ENCODE measurements at regions of chr19 and their contacts with region 1.

Region 1: DNA sequence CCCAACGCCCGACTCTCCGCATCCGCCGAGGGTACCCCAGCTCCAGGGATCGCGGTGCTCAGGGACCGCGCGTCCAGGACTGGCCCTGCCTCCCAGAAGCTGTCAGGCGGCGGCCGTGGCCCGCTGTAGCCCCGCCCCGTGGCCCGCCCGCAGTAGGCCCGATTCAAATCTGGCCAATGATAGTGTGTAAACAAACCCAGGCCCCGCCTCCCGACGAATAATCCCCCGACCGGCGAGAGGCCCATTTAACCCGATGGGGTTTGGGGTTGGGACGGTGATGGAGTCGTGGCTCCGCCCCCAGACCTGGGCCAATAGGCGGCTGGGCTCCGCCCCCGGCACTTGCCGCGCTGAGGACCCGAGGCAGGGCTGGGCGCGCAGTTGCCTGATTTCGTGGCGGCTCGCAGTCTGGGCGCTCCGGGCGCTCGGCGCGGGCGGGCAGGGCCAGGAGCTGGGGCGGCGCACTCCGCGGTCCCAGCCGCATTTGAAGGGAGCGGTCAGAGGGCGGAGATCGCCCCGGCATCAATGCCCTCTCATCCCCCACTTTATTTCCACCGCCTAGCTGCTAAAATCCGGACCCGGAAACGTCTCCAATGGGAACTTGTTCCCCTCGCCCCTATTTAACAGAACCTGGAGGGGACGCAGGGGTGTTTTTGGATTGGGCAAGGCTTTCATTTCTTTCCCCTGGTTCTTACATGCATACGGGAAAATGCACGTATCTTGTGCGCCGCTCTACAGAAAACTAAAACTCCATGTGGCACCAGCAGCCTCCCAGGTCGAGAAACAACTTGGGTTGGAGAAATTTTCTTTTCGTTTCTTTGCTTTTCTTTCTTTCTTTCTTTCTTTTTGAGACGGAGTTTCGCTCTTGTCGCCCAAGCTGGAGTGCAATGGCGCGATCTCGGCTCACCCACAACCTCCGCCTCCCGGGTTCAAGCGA is 8.4 kb upstream of the BICRA start:
- DNase-seq: peak; percentile 98
- ATAC-seq: peak; percentile 82
- H3K4me3 ChIP-seq: peak overlapping the region; percentile 76
- H3K27ac ChIP-seq: peak overlapping the region; percentile 91
- H3K4me1 ChIP-seq: peaks cover 24% of the 10 kb centered on the region
- H3K27me3 ChIP-seq: no peaks in the 10 kb centered on the region
- CTCF ChIP-seq: no peak

Region 2: GRCh38 chr19:47436712-47437401 is 163.7 kb before region 1 on chr19:
- CTCF ChIA-PET with region 1: no interaction called
- POLR2A ChIA-PET with region 1: no interaction called
- intact Hi-C with region 1: loop called (anchors 5 kb)
- DNase-seq: peak; percentile 74
- ATAC-seq: peak; percentile 90
- H3K4me3 ChIP-seq: no peak overlapping the region
- H3K27ac ChIP-seq: no peak overlapping the region
- H3K4me1 ChIP-seq: no peaks in the 10 kb centered on the region
- H3K27me3 ChIP-seq: no peaks in the 10 kb centered on the region
- CTCF ChIP-seq: peak; percentile 76

Region 3: DNA sequence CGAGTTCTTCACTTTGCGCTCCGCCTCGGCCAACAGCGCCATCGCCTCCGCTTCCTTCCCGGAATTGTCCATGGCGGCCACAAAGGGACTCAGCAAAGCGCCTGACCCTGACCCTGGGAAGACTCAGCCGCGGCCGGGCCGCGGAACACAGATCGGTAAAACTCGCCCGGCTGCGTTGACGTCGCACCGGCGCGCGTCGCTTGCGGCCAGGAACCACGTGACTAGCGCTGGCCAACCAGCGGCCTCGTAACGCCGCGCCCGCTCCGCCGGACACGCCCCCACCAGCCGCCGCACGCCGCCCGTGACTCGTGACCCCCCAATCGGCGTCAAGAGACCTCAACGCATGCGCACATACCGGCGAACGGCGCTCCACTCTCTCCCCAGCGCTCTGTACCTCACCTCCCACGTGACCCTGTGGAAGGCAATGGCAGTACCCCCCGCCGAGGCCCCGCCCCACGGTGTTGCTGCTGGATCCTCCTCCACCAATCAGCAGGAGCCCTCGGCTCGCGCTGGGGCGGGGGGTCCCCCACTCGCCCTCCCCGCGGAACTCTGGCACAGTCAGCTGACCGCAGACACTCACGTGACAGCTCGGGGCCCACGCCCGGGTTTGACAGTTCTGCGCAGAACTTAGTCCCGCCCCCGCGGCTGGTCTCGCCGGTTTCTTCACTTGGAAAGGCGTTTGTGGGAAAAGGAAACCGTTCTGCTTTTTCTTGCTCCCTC is 85.5 kb before region 1 on chr19 and contains the start of gene NAPA:
- CTCF ChIA-PET with region 1: interaction called, 10 read pairs
- POLR2A ChIA-PET with region 1: no interaction called
- intact Hi-C with region 1: loop called (anchors 1 kb)
- DNase-seq: peak; percentile 98
- ATAC-seq: peak; percentile 94
- H3K4me3 ChIP-seq: peak within 1 kb of the TSS; percentile 95
- H3K27ac ChIP-seq: peak within 1 kb of the TSS; percentile 64
- H3K4me1 ChIP-seq: peaks cover 31% of the 10 kb centered on the region
- H3K27me3 ChIP-seq: no peaks in the 10 kb centered on the region
- CTCF ChIP-seq: no peak
- total RNA-seq, gene NAPA: 75.1 and 95.9 TPM in 2 replicates

Region 4: DNA sequence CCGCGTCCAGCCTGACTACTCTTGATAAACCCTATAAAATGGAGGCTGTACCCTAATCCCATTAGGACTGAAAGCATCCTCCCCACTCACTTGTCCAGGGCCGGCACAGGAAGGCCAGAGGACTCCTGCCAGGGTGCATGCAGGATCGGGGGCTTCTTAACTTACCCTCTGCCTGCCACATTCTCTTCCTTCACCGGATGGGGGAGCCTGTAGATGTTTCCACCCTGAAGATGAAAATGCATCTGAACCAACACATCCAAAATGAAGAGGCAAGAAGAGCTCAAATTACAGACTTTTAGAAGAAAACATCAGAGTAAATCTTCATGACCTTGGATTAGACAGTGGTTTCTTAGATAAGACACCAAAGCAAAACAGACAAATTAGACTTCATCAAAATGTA is 59.8 kb before region 1 on chr19:
- CTCF ChIA-PET with region 1: no interaction called
- POLR2A ChIA-PET with region 1: no interaction called
- intact Hi-C with region 1: loop called (anchors 10 kb)
- DNase-seq: peak; percentile 14
- ATAC-seq: no peak
- H3K4me3 ChIP-seq: no peak overlapping the region
- H3K27ac ChIP-seq: no peak overlapping the region
- H3K4me1 ChIP-seq: no peaks in the 10 kb centered on the region
- H3K27me3 ChIP-seq: no peaks in the 10 kb centered on the region
- CTCF ChIP-seq: peak; percentile 39; the same call in 1 of the 2 replicates

Region 5: DNA sequence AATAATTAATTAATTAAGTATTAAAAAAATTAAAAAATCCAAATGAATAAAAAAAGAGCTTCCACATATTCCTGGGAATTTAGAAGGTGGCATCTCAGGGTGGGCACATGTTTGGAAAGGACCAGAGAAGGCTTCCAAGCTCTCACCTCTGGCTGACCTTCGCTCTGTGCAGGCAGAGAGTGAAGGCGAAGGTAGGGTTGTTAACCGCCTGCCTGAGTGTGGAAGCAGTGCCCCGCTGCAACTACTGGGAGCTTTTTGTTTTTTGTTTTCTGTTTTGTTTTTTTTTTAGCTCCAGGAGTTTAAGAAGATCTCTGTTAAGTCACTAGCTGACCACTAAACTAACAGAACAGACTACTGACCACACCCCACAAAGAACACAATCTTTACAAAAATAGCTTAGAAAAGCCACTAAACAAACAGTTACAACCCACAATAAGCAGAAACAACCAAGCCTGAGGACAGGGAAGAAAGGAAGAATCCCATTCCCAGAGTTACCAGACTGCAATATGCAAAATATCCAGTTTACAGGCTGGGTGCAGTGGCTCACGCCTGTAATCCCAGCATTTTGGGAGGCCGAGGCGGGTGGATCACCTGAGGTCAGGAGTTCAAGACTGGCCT is 39.0 kb before region 1 on chr19:
- CTCF ChIA-PET with region 1: interaction called, 3 read pairs
- POLR2A ChIA-PET with region 1: no interaction called
- intact Hi-C with region 1: loop called (anchors 1 kb)
- DNase-seq: peak; percentile 71
- ATAC-seq: peak; percentile 93
- H3K4me3 ChIP-seq: no peak overlapping the region
- H3K27ac ChIP-seq: peak overlapping the region; percentile 61
- H3K4me1 ChIP-seq: peaks cover 20% of the 10 kb centered on the region; the same call in 1 of the 2 replicates
- H3K27me3 ChIP-seq: no peaks in the 10 kb centered on the region
- CTCF ChIP-seq: no peak

Region 6: DNA sequence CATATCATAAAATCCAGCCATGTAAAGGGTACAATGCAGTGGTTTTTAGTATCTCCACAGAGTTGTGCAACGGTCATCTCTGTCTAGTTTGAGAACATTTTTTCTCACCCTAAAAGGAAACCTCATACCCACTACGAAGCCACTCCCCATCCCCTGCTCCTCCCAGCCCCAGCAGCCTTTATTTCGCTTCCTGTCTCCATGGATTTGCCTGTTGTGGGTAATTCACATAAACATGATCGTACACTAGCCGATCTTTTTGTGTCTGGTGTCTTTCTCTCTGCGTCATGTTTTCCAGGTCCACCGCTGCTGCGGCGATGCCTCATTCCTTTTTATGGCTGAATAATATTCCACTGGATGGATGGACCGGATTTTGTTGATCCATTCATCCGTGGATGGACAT is 37.0 kb after region 1 on chr19:
- CTCF ChIA-PET with region 1: no interaction called
- POLR2A ChIA-PET with region 1: no interaction called
- intact Hi-C with region 1: no loop called
- DNase-seq: no peak
- ATAC-seq: no peak
- H3K4me3 ChIP-seq: no peak overlapping the region
- H3K27ac ChIP-seq: no peak overlapping the region
- H3K4me1 ChIP-seq: peaks cover 10% of the 10 kb centered on the region
- H3K27me3 ChIP-seq: no peaks in the 10 kb centered on the region
- CTCF ChIP-seq: no peak

Region 7: GRCh38 chr19:47663841-47664771 is 63.6 kb after region 1 on chr19:
- CTCF ChIA-PET with region 1: no interaction called
- POLR2A ChIA-PET with region 1: no interaction called
- intact Hi-C with region 1: loop called (anchors 2 kb)
- DNase-seq: peak; percentile 86
- ATAC-seq: peak; percentile 68
- H3K4me3 ChIP-seq: peak overlapping the region; percentile 53
- H3K27ac ChIP-seq: peak overlapping the region; percentile 99
- H3K4me1 ChIP-seq: peaks cover 44% of the 10 kb centered on the region
- H3K27me3 ChIP-seq: no peaks in the 10 kb centered on the region
- CTCF ChIP-seq: no peak

Region 8: GRCh38 chr19:47745010-47745901 is 144.7 kb after region 1 on chr19 and contains the start of gene NOP53:
- CTCF ChIA-PET with region 1: no interaction called
- POLR2A ChIA-PET with region 1: no interaction called
- intact Hi-C with region 1: loop called (anchors 2 kb)
- DNase-seq: peak; percentile 94
- ATAC-seq: peak; percentile 52
- H3K4me3 ChIP-seq: peak within 1 kb of the TSS; percentile 88
- H3K27ac ChIP-seq: peak within 1 kb of the TSS; percentile 75
- H3K4me1 ChIP-seq: peaks cover 23% of the 10 kb centered on the region
- H3K27me3 ChIP-seq: no peaks in the 10 kb centered on the region
- CTCF ChIP-seq: no peak
- total RNA-seq, gene NOP53: 61.5 and 83.9 TPM in 2 replicates

Measured in PC-3 (cell line).